Prostate gland (tissue), 2 donors: ENCODE measurements at regions of chr3 and their contacts with region 1.

Region 1: DNA sequence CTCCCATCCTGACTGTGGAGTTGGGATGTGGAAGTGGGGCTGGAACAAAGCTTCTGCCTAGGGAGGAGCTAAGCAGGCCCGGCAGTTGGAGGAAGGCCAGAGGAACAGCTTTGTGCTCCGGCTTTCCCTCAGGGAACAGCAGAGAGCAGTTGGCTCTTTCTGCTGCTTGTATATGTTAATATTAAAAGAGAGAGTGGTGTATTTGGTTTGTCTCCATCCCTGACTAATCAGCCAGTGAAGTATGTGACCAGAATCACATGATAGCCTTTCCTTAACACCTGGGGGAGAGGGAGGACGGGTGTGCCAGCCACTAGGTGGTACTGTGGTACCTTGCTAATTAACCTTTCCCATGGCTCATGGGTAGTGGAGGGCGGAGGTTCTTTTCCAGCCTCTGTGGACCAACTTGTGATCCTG is 10.0 kb downstream of the EIF2B5 start:
- DNase-seq: peak; percentile 56
- H3K4me3 ChIP-seq: no peak overlapping the region
- H3K27ac ChIP-seq: peak overlapping the region; percentile 34 to 49
- H3K4me1 ChIP-seq: peaks cover 4% of the 10 kb centered on the region
- H3K27me3 ChIP-seq: no peaks in the 10 kb centered on the region
- CTCF ChIP-seq: peak in 3 of 4 experiments; percentile 49 to 76 (median 68)
- POLR2A ChIP-seq: no peak

Region 2: DNA sequence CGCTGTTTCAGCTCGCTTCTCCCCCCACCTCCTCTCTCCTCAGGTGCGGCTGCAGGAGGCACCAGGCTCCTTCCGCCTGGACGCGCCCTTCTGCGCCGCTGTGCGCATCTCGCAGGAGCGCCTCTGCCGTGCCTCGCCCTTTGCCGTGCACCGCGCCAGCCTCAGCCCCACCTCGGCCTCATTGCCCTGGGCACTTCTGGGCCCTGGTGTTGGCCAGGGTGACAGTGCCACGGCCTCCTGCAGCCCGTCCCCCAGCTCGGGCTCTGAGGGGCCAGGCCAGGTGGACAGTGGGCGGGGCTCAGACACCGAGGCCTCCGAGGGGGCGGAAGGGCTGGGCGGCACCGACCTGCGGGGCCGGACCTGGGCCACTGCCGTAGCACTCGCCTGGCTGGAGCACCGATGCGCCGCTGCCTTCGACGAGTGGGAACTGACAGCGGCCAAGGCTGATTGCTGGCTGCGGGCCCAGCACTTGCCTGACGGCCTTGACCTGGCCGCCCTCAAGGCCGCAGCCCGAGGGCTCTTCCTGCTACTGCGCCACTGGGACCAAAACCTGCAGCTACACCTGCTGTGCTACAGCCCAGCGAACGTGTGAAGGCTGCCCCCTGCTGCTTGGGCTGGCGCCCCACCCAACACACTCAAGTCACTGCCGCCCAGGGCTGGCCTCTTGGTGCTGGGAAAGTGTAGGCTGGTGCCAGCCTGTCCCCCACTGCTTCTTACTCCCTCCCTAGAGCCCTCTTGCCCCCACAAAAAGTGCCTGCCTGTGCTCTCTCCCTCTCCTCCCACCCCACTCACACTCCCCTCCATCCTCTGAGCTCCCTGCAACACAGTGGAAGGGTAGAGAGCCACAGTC is 96.6 kb after region 1 on chr3:
- intact Hi-C with region 1: loop called (anchors 5 kb)
- DNase-seq: no peak
- H3K4me3 ChIP-seq: no peak overlapping the region
- H3K27ac ChIP-seq: no peak overlapping the region
- H3K4me1 ChIP-seq: no peaks in the 10 kb centered on the region
- H3K27me3 ChIP-seq: no peaks in the 10 kb centered on the region
- CTCF ChIP-seq: peak in 3 of 4 experiments; percentile 35 to 72 (median 58)
- POLR2A ChIP-seq: no peak